ENCODE measurements at regions of chr18 and their contacts with region 1.

Region 1: GRCh38 chr18:64294967-64295366 is 146.1 kb upstream of the LINC00305 start:
- DNase-seq: no peak
- ATAC-seq: no peak

Region 2: DNA sequence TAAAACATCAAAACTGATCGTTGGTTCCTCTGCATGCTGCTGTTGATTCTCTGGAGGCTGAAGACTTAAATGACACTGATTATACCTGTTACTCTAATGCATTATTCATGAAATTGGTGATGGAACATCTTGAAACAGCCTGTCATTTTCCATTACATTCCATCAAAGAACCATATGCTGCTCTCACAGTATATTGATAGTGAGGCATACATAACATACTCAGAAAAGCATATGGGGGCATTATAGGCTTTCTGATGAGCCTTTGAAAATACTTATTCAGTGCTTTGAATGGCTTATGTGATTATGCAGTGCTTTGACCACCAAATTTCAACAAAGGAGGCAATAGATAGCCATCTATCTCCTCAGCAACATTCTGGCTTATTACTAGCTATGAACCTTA is 1916.8 kb after region 1 on chr18:
- intact Hi-C with region 1: loop called (anchors 10 kb)
- DNase-seq: no peak
- ATAC-seq: no peak